H1 (cell line): ENCODE measurements at regions of chr19 and their contacts with region 1.

Region 1: GRCh38 chr19:36032251-36033104 is at the start of gene CLIP3:
- DNase-seq: peak in 1 of 2 experiments; percentile 90
- H3K4me3 ChIP-seq: peak within 1 kb of the TSS; percentile 58 to 97 (median 80)
- H3K27ac ChIP-seq: no peak within 1 kb of the TSS
- H3K4me1 ChIP-seq: peaks cover 0 to 11% (median 4%) of the 10 kb centered on the region in 4 experiments; a peak in 6 of 7 replicates
- H3K27me3 ChIP-seq: peaks cover 0 to 4% (median 0%) of the 10 kb centered on the region in 4 experiments; a peak in 4 of 7 replicates
- CTCF ChIP-seq: no peak
- EP300 ChIP-seq: no peak
- POLR2A ChIP-seq: peak in 1 of 2 experiments; percentile 11; a peak in 1 of 3 replicates
- RAD21 ChIP-seq: no peak
- total RNA-seq, gene CLIP3: 21.7 and 33.7 TPM in 2 replicates

Region 2: DNA sequence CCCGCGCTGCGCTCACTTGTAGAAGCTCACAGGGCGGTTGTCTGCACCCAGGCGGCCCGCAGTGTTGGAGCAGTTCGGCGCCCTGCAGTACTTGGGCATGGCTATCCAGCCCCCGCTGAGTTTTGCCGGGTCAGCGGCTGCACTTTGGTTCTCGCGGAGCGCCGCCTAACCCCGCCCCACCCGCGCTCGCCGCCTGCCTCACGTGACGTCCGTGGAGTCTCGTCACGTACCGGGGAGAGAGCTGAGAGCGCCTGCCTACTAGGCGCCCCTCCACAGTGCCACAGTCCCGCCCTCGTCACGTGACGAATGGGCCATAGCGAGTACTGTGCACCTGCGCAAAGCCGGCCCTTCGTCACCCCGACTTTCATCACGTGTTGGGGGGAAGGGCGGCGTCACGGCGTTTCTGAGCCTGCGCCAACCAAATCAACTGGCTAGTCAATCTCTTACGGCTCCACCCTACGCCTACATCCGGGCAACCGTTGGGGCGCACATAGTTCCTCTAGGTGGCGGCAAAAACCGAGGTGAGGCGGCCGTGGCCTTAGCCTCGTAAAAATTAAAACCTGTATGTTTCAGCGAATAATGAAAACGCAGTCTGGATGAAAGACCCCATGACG is 21.7 kb after region 1 on chr19 and contains the start of gene THAP8:
- CTCF ChIA-PET with region 1: interaction called, 14 read pairs
- POLR2A ChIA-PET with region 1: interaction called, 10 read pairs
- DNase-seq: peak; percentile 96 to 98
- H3K4me3 ChIP-seq: peak within 1 kb of the TSS; percentile 75 to 94 (median 82)
- H3K27ac ChIP-seq: peak within 1 kb of the TSS; percentile 83; the same call in 1 of the 2 replicates
- H3K4me1 ChIP-seq: peaks cover 0 to 11% (median 4%) of the 10 kb centered on the region in 4 experiments; a peak in 5 of 7 replicates
- H3K27me3 ChIP-seq: no peaks in the 10 kb centered on the region
- CTCF ChIP-seq: peak; percentile 18 to 36 (median 26); a peak in 2 of 4 replicates
- EP300 ChIP-seq: no peak
- POLR2A ChIP-seq: peak; percentile 74 to 88
- RAD21 ChIP-seq: no peak
- total RNA-seq, gene THAP8: 6.0 and 6.4 TPM in 2 replicates

Region 3: GRCh38 chr19:36114763-36115452 is 82.4 kb after region 1 on chr19 and contains the start of gene POLR2I:
- CTCF ChIA-PET with region 1: no interaction called
- POLR2A ChIA-PET with region 1: no interaction called
- DNase-seq: peak; percentile 98 to 99
- H3K4me3 ChIP-seq: peak within 1 kb of the TSS; percentile 73 to 96 (median 82)
- H3K27ac ChIP-seq: peak within 1 kb of the TSS; percentile 76
- H3K4me1 ChIP-seq: peaks cover 8 to 24% (median 18%) of the 10 kb centered on the region in 4 experiments
- H3K27me3 ChIP-seq: no peaks in the 10 kb centered on the region
- CTCF ChIP-seq: no peak
- EP300 ChIP-seq: no peak
- POLR2A ChIP-seq: peak in 1 of 2 experiments; percentile 70; a peak in 2 of 3 replicates
- RAD21 ChIP-seq: no peak
- total RNA-seq, gene POLR2I: 149 and 150 TPM in 2 replicates

Region 4: GRCh38 chr19:36136964-36137686 is 104.6 kb after region 1 on chr19:
- CTCF ChIA-PET with region 1: no interaction called
- POLR2A ChIA-PET with region 1: no interaction called
- DNase-seq: no peak
- H3K4me3 ChIP-seq: no peak overlapping the region
- H3K27ac ChIP-seq: no peak overlapping the region
- H3K4me1 ChIP-seq: peaks cover 0 to 6% (median 5%) of the 10 kb centered on the region in 4 experiments; a peak in 3 of 7 replicates
- H3K27me3 ChIP-seq: no peaks in the 10 kb centered on the region
- CTCF ChIP-seq: no peak
- EP300 ChIP-seq: no peak
- POLR2A ChIP-seq: no peak
- RAD21 ChIP-seq: no peak